ENCODE measurements at regions of chr7 and their contacts with region 1.

Region 1: DNA sequence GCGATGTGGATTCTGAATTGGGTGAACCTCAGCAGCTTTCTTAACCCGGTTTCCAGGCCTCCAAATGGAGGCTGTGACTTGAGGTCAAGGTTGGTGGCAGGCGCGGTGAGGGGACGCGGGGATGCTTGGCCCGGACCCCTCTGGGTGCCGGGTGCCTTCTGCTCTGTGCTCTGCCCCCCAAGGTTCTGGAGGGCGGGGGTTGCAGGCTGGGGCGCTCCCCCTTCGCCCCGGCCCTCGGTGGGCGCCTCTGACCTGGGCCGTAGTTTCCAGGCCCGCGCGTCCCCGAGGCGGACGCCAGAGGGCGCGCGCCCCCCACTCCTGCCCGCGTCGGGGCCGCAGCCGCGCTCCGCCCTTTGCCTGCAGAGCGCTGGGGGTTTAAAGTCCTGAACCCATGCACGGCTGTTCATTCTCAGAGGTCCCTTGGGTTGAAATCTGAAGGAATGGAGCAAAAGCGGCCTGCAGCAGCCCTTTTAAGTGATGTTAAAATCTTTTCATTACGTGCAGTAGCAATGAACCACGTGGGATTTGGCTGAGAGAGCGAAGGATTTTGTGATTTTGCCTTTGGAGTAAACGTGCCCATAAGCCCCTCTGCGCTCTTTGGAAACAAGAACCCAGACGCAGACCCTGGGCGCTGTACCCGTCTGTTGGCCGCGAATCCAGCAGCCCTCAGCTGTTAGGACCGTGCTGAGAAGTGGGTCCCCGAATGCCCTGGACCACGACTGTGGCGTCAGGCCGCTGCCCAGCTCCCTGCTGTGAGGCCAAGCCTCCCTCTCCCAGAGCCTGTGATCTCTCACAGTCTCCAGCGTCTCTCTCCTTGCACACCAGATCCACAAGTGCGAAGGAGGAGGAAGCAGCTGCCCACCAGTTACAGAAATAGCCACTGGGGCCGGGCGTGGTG is 135.0 kb downstream of the ACTR3B start:
- DNase-seq: peak; percentile 97
- H3K4me3 ChIP-seq: no peak overlapping the region; a peak in 1 of 4 replicates
- H3K27ac ChIP-seq: no peak overlapping the region
- H3K4me1 ChIP-seq: no peaks in the 10 kb centered on the region
- H3K27me3 ChIP-seq: no peaks in the 10 kb centered on the region
- CTCF ChIP-seq: peak; percentile 51
- EP300 ChIP-seq: no peak
- RAD21 ChIP-seq: peak; percentile 84

Region 2: DNA sequence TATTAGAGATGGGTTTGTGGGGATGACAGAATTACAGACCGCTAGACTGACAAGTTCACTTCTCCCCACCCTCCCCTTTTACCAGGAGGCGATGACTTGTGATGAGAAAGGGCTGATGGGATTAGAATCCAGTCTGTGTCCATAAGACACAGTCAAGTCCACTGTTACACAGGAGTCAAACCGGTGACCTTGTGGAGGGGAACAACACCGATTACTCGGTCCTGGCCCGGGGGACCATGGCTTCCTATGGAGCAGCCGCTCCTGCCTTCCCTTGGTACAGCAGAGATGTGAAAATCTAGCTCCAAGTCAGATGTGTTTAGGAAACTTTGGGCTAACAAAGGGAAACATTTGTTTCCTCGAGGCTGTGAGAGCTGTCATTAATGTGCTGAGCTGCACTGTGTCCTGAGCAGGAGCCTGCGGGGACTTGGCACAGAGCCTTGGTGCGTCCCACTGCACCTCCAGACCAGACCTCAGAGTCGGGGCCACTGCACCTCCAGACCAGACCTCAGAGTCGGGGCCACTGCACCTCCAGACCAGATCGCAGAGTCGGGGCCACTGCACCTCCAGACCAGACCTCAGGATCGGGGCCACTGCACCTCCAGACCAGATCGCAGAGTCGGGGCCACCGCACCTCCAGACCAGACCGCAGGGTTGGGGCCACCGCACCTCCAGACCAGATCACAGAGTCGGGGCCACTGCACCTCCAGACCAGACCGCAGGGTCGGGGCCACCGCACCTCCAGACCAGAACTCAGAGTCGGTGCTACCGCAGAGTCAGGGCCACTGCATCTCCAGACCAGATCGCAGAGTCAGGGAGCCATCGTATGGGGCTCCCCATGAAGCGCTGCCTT is 29.3 kb before region 1 on chr7:
- CTCF ChIA-PET with region 1: interaction called, 4 read pairs
- POLR2A ChIA-PET with region 1: interaction called, 10 read pairs
- DNase-seq: no peak
- H3K4me3 ChIP-seq: no peak overlapping the region
- H3K27ac ChIP-seq: no peak overlapping the region; a peak in 1 of 4 replicates
- H3K4me1 ChIP-seq: peaks cover 0 to 11% of the 10 kb centered on the region in 2 experiments; a peak in 1 of 4 replicates
- H3K27me3 ChIP-seq: no peaks in the 10 kb centered on the region
- CTCF ChIP-seq: no peak
- EP300 ChIP-seq: no peak
- RAD21 ChIP-seq: no peak

Region 3: GRCh38 chr7:152922318-152923081 is 28.0 kb after region 1 on chr7:
- CTCF ChIA-PET with region 1: interaction called, 13 read pairs
- POLR2A ChIA-PET with region 1: no interaction called
- DNase-seq: peak; percentile 86
- H3K4me3 ChIP-seq: no peak overlapping the region
- H3K27ac ChIP-seq: no peak overlapping the region
- H3K4me1 ChIP-seq: peaks cover 0 to 12% of the 10 kb centered on the region in 2 experiments; a peak in 1 of 4 replicates
- H3K27me3 ChIP-seq: no peaks in the 10 kb centered on the region
- CTCF ChIP-seq: no peak
- EP300 ChIP-seq: peak in 1 of 2 experiments; percentile 58; a peak in 1 of 4 replicates
- RAD21 ChIP-seq: no peak

Region 4: GRCh38 chr7:153473185-153473584 is 578.7 kb after region 1 on chr7:
- CTCF ChIA-PET with region 1: no interaction called
- POLR2A ChIA-PET with region 1: no interaction called
- DNase-seq: no peak
- H3K4me3 ChIP-seq: no peak overlapping the region
- H3K27ac ChIP-seq: no peak overlapping the region
- H3K4me1 ChIP-seq: no peaks in the 10 kb centered on the region
- H3K27me3 ChIP-seq: no peaks in the 10 kb centered on the region
- CTCF ChIP-seq: no peak
- EP300 ChIP-seq: no peak
- RAD21 ChIP-seq: no peak